ENCODE measurements at regions of chr15 and their contacts with region 1.

Region 1: GRCh38 chr15:81301815-81302399 is 22.0 kb downstream of the STARD5 start:
- DNase-seq: peak; percentile 72
- ATAC-seq: peak; percentile 61
- H3K4me3 Mint-ChIP-seq: peak overlapping the region; percentile 98
- H3K27ac Mint-ChIP-seq: peak overlapping the region; percentile 98
- H3K4me1 Mint-ChIP-seq: peaks cover 56% of the 10 kb centered on the region
- H3K27me3 Mint-ChIP-seq: no peaks in the 10 kb centered on the region
- CTCF ChIP-seq: no peak

Region 2: GRCh38 chr15:81312790-81313543 is 11.1 kb after region 1 on chr15:
- CTCF ChIA-PET with region 1: interaction called, 10 read pairs
- POLR2A ChIA-PET with region 1: interaction called, 15 read pairs
- intact Hi-C with region 1: no loop called
- DNase-seq: no peak
- ATAC-seq: no peak
- H3K4me3 Mint-ChIP-seq: no peak overlapping the region
- H3K27ac Mint-ChIP-seq: peak overlapping the region; percentile 69
- H3K4me1 Mint-ChIP-seq: peaks cover 72% of the 10 kb centered on the region
- H3K27me3 Mint-ChIP-seq: no peaks in the 10 kb centered on the region
- CTCF ChIP-seq: no peak

Region 3: GRCh38 chr15:81323944-81324881 is 22.3 kb after region 1 on chr15 and contains the start of gene STARD5:
- CTCF ChIA-PET with region 1: interaction called, 3 read pairs
- POLR2A ChIA-PET with region 1: interaction called, 29 read pairs
- intact Hi-C with region 1: no loop called
- DNase-seq: peak; percentile 98
- ATAC-seq: peak; percentile 100
- H3K4me3 Mint-ChIP-seq: peak within 1 kb of the TSS; percentile 84
- H3K27ac Mint-ChIP-seq: peak within 1 kb of the TSS; percentile 86
- H3K4me1 Mint-ChIP-seq: peaks cover 37% of the 10 kb centered on the region
- H3K27me3 Mint-ChIP-seq: no peaks in the 10 kb centered on the region
- CTCF ChIP-seq: no peak
- total RNA-seq, gene STARD5: 6.7 to 6.9 TPM

Region 4: DNA sequence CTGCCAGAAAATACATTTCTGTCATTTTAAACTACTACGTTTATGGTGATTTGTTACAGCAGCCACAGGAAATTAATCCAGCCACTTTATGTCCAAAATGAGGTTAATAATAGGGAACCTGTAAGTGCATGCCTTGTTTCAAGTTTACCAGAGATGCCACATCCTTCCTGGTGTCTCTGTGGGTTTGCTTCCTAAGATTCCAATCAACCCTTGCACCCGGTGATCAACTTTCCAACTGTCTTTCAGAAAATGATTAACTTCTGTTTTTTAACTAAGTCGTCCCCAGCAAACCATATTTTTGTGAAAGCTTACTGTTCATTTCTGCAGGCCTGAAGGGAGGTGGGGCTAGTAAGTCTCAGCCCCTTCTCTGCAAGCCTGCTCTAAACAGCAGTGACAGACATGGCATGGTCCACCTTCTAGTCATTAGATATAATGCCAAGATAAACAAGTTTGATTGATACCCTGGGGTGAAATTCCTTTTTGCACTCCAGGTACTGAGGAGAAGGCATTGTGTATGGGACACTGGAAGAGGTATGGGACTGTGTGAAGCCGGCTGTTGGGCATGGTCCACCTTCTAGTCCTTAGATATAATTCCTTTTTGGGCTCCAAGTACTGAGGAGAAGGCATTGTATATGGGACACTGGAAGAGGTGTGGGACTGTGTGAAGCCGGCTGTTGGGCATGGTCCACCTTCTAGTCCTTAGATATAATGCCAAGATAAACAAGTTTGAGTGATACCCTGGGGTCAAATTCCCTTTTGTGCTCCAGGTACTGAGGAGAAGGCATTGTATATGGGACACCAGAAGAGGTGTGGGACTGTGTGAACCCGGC is 83.2 kb after region 1 on chr15:
- CTCF ChIA-PET with region 1: no interaction called
- POLR2A ChIA-PET with region 1: no interaction called
- intact Hi-C with region 1: no loop called
- DNase-seq: no peak
- ATAC-seq: no peak
- H3K4me3 Mint-ChIP-seq: no peak overlapping the region
- H3K27ac Mint-ChIP-seq: no peak overlapping the region
- H3K4me1 Mint-ChIP-seq: no peaks in the 10 kb centered on the region
- H3K27me3 Mint-ChIP-seq: no peaks in the 10 kb centered on the region
- CTCF ChIP-seq: no peak

Measured in activated CD8-positive, alpha-beta T cell treated with anti-CD3 and anti-CD28 coated beads for 36 hours (primary cell).